Sciatic nerve (tissue), 2 donors: ENCODE measurements at regions of chr10 and their contacts with region 1.

Region 1: DNA sequence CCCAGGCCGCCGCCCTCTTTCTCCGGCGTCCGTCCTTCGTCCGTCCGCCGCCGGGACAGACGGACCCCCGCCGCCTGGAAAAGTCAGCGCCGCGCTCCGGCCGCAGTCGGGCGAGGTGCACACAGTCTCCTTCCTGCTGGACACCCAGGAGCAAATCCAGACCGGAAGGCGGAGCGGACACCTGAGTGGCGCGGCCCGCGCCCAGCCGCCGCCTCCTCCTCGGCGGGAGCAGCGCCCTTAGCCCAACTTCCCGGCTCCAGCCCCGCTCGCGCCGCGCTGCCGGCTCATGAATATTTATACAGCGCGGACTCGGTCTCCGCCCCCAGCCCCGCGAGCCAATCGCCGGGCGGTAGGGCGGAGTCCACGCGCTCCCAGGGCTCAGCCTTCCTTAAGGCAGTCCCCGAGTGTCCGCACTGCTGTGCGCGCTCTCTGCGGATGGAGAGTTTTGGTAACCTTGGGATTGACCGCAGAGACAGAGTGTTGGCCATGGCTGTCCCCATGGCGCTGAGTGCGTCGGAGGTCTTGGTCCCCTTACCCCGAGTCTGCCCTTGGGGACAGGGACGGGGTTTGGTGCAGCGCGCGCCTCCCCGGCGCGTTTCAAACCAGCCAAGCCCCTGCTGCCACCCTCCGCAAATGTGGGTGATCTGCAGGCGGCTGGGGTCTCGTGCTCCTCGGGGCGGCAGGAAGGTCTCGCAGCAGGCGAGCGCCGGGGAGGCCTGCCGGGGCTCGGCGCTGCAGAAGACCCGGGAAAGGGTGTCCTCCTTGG is at the start of gene FZD8:
- DNase-seq: peak; percentile 96
- ATAC-seq: peak; percentile 95
- total RNA-seq, gene FZD8: 43.5 TPM

Region 2: DNA sequence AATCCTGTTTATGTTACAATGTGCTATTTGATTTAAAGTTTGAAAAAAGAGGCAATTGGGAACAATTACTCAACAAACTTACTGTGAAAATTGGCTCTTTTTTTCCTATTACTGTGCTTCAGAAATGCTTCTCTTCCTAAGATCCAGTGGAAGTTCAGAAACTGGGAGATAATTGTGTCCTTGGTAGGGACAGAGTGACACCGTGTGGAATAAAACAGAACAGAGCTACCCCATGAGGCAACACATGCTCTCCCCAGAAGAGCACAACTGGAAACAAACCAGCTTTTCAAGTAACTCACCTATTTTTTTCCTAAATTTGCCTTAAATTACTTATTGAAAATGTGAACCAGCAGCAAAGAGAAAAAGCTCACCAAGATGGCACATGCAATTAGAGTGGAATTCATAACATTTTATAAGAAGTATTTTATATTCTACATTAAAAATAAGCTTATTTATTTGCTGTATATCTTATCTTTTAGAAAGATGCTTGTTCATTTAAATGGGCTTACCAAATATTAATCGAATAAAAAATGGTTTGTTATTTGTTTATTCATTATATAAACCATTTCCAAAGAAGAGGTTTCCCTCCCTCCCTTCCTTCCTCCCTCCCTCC is 1137.1 kb after region 1 on chr10:
- intact Hi-C with region 1: loop called (anchors 5 kb)
- DNase-seq: no peak
- ATAC-seq: peak; percentile 98